ENCODE measurements at regions of chrX and their contacts with region 1.

Region 1: GRCh38 chrX:14029425-14030173 is at the start of gene GEMIN8:
- DNase-seq: peak; percentile 95
- H3K4me3 Mint-ChIP-seq: peak within 1 kb of the TSS; percentile 77
- H3K27ac Mint-ChIP-seq: peak within 1 kb of the TSS; percentile 86
- H3K4me1 Mint-ChIP-seq: peaks cover 31% of the 10 kb centered on the region
- H3K27me3 Mint-ChIP-seq: peaks cover 13% of the 10 kb centered on the region
- CTCF ChIP-seq: no peak
- total RNA-seq, gene GEMIN8: 24.6 and 28.2 TPM in 2 replicates

Region 2: GRCh38 chrX:13688958-13689740 is 340.4 kb before region 1 on chrX and contains the start of gene RAB9A:
- CTCF ChIA-PET with region 1: no interaction called
- POLR2A ChIA-PET with region 1: interaction called, 10 read pairs
- intact Hi-C with region 1: no loop called
- DNase-seq: peak; percentile 86
- H3K4me3 Mint-ChIP-seq: peak within 1 kb of the TSS; percentile 84
- H3K27ac Mint-ChIP-seq: peak within 1 kb of the TSS; percentile 77
- H3K4me1 Mint-ChIP-seq: peaks cover 37% of the 10 kb centered on the region
- H3K27me3 Mint-ChIP-seq: peaks cover 8% of the 10 kb centered on the region
- CTCF ChIP-seq: no peak
- total RNA-seq, gene RAB9A: 28.0 and 32.3 TPM in 2 replicates

Region 3: DNA sequence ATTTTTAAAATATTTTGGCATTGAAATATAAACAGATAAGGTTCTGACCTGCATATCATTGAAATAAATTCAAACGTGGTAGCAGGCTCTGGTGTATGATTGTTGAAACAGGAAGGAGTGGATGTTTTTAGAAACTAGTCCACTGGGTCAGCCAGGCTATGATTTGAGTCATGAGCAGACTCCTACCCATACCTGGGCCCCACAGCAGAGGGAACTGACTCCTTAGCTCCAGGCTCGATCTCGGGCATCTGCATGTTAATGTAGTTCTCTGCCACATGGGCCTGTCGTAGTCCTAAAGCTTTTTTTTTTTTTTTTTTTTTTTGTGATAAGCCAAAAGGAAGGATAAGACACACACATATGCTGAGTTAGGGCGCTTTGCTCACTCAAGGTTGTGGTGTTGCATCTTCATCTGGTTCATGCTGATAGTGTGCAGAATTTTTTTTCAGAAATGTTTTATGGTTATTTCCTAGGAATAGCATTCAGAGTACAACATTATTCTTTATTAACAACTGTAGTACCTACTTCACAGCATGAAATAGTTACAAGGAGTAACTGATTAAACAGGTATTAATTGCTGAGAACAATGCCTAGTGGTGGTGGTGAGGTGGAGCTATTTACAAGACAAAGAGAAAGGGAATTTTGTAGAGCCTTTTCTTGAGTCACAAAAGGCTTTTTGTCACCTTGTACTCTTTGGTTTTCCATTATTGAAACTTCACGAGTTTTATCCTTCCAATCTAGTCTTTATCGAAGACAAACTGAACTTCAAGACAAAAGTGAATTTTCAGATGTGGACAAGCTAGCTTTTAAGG is 267.8 kb before region 1 on chrX:
- CTCF ChIA-PET with region 1: interaction called, 9 read pairs
- POLR2A ChIA-PET with region 1: interaction called, 10 read pairs
- intact Hi-C with region 1: no loop called
- DNase-seq: no peak
- H3K4me3 Mint-ChIP-seq: no peak overlapping the region
- H3K27ac Mint-ChIP-seq: no peak overlapping the region
- H3K4me1 Mint-ChIP-seq: no peaks in the 10 kb centered on the region
- H3K27me3 Mint-ChIP-seq: no peaks in the 10 kb centered on the region
- CTCF ChIP-seq: no peak

Region 4: DNA sequence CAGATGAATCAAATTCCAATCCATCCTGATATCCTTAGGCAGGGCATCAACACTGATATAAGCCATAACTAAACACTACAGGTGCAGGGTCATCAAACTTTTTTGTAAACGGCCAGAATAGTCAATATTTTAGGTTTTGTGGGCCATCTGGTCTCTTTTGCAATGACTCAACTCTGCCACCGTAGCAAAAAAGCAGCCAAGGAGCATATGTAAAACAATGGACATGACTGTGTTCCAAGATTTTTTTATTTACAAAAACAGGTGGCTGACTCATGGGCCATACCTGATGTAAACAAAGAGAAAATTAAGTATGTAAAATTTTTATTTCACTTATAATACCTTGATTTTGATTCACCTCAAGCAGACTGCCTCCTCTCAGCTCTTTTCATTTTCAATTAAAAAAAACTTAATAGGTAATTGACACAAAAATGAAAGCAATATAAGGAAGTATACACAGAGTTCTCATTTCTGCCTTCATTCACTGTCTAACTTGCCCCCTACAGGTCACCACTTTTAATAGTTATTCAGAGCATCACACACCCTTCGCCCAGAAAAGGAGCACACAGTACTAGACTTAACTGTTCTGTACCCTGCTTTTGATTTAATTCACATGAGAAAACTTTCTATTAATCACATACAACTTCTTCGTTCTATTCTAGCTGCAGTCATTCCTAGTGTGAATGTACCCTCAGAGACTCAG is 177.5 kb before region 1 on chrX:
- CTCF ChIA-PET with region 1: interaction called, 3 read pairs
- POLR2A ChIA-PET with region 1: interaction called, 12 read pairs
- intact Hi-C with region 1: no loop called
- DNase-seq: peak; percentile 55
- H3K4me3 Mint-ChIP-seq: no peak overlapping the region
- H3K27ac Mint-ChIP-seq: no peak overlapping the region
- H3K4me1 Mint-ChIP-seq: peaks cover 6% of the 10 kb centered on the region
- H3K27me3 Mint-ChIP-seq: peaks cover 66% of the 10 kb centered on the region
- CTCF ChIP-seq: peak; percentile 10

Region 5: DNA sequence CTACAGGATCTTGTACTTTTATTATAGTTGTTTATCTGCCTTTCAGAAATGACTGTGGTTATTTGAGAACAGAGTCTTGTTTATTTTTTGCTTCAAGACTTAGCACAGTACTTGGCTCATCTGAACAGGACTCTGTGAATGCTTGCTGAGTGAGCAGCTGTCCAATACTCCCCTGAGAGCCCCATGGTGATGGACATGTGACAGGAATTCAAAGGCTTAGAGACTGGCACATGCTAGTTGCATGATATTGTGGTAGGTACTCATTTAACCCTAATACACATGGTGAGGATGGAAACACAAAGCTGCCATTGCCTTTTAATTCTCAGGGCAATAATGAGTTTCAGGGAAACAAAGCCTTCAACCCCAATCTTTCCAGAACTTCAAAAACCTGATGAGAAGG is 97.2 kb before region 1 on chrX:
- CTCF ChIA-PET with region 1: interaction called, 6 read pairs
- POLR2A ChIA-PET with region 1: interaction called, 63 read pairs
- intact Hi-C with region 1: loop called (anchors 5 kb)
- DNase-seq: no peak
- H3K4me3 Mint-ChIP-seq: no peak overlapping the region
- H3K27ac Mint-ChIP-seq: no peak overlapping the region
- H3K4me1 Mint-ChIP-seq: peaks cover 13% of the 10 kb centered on the region
- H3K27me3 Mint-ChIP-seq: peaks cover 66% of the 10 kb centered on the region
- CTCF ChIP-seq: no peak

Region 6: DNA sequence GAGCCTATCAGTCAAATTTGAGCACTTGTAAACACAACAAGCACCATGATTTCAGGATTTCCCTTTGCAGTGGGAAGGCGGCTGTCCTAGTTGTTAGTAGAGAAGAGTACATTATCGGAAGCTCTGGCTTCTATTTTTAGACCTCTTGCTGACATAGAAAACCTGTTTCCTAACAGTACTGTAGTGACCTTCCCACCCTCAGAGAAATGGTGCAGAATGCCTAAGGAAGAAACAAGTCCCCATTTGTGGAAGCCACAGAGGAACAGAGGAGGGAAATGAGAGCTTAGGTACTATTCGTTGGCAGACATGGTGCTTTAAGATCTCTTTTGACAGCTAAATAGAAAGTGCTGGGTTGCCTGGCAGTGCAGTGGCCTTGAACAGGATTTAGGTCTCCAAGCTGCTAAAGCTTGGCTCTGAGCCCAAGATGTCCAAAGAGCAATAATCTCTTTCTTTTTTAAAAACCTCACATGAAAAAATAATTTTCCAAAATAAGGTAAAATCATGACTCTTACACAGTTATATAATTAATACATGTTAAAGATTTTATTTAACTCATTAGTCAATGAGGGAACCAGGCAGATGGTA is 524.6 kb after region 1 on chrX:
- CTCF ChIA-PET with region 1: no interaction called
- POLR2A ChIA-PET with region 1: no interaction called
- intact Hi-C with region 1: no loop called
- DNase-seq: no peak
- H3K4me3 Mint-ChIP-seq: no peak overlapping the region
- H3K27ac Mint-ChIP-seq: no peak overlapping the region
- H3K4me1 Mint-ChIP-seq: no peaks in the 10 kb centered on the region
- H3K27me3 Mint-ChIP-seq: peaks cover 48% of the 10 kb centered on the region
- CTCF ChIP-seq: no peak